ENCODE measurements at regions of chr12 and their contacts with region 1.

Region 1: GRCh38 chr12:9647825-9648700 is 21.4 kb upstream of the CLEC2D start:
- DNase-seq: peak; percentile 96
- H3K4me3 Mint-ChIP-seq: peak overlapping the region; percentile 93
- H3K27ac Mint-ChIP-seq: peak overlapping the region; percentile 96
- H3K4me1 Mint-ChIP-seq: peaks cover 59% of the 10 kb centered on the region
- H3K27me3 Mint-ChIP-seq: peaks cover 2% of the 10 kb centered on the region

Region 2: GRCh38 chr12:9662500-9662899 is 14.4 kb after region 1 on chr12:
- CTCF ChIA-PET with region 1: interaction called, 16 read pairs
- POLR2A ChIA-PET with region 1: interaction called, 59 read pairs
- DNase-seq: no peak
- H3K4me3 Mint-ChIP-seq: no peak overlapping the region
- H3K27ac Mint-ChIP-seq: peak overlapping the region; percentile 81
- H3K4me1 Mint-ChIP-seq: peaks cover 85% of the 10 kb centered on the region
- H3K27me3 Mint-ChIP-seq: no peaks in the 10 kb centered on the region

Region 3: GRCh38 chr12:9673404-9674225 is 25.6 kb after region 1 on chr12:
- CTCF ChIA-PET with region 1: interaction called, 8 read pairs
- POLR2A ChIA-PET with region 1: interaction called, 59 read pairs
- DNase-seq: peak; percentile 58
- H3K4me3 Mint-ChIP-seq: peak overlapping the region; percentile 84
- H3K27ac Mint-ChIP-seq: peak overlapping the region; percentile 98
- H3K4me1 Mint-ChIP-seq: peaks cover 56% of the 10 kb centered on the region
- H3K27me3 Mint-ChIP-seq: no peaks in the 10 kb centered on the region